Activated T-helper 1 cell treated with anti-CD3 and anti-CD28 coated beads, Interleukin-12 subunit alpha, Interleukin-12 subunit beta, Interleukin-2, Interleukin-4 antibody, amounts not matched to agents 30 ng/mL and 10 ng/mL and 1 ng/mL, durations not matched to agents 14 hours and 24 hours and 36 hours (primary cell): ENCODE measurements at regions of chr4 and their contacts with region 1.

Region 1: DNA sequence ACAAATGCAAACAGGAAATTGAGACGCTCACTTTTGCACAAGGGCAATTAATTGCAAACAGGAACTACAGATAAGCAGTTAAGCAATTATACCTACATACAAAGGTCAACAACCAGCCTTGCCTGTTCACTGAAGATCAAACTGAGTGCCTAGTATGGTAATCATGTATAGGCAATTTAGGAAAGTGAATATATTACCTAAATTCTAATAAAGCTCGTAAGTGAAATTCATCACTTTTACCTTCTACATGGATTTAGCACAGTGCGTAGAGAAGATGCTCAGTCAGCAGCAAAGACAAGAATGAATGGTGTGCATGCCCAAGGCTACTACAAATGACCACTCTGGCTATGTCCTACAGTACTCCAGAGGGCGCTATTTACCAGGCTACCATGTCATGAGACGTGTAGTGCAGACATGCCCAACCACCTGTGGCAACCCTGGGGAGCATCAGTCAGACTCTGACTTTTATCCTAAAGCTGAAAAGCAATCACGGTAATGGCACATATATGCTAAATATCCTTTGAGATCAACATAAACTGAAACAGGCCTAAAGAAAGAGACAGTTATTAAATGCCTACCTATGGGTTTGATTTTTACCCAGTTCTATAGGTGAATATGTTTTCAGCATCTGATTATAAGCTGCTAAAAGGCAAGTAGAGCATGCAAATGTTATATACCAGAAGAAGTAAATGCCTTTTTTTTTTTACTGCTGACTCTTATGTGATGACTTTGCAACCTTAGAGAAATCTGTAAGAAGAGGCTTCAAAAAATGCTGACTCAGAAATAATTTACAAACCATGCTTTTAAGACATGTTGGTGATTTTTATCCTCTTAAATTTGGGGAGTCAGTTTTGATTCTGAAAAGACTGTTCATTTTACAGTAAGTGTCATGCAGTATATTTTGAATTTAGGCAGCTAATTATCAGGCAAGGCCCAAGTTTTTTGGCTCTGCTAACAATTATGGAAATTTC is 178.0 kb downstream of the PPP3CA start:
- DNase-seq: peak; percentile 43
- H3K4me3 Mint-ChIP-seq: no peak overlapping the region
- H3K27ac Mint-ChIP-seq: no peak overlapping the region
- H3K4me1 Mint-ChIP-seq: no peaks in the 10 kb centered on the region
- H3K27me3 Mint-ChIP-seq: peaks cover 4% of the 10 kb centered on the region

Region 2: DNA sequence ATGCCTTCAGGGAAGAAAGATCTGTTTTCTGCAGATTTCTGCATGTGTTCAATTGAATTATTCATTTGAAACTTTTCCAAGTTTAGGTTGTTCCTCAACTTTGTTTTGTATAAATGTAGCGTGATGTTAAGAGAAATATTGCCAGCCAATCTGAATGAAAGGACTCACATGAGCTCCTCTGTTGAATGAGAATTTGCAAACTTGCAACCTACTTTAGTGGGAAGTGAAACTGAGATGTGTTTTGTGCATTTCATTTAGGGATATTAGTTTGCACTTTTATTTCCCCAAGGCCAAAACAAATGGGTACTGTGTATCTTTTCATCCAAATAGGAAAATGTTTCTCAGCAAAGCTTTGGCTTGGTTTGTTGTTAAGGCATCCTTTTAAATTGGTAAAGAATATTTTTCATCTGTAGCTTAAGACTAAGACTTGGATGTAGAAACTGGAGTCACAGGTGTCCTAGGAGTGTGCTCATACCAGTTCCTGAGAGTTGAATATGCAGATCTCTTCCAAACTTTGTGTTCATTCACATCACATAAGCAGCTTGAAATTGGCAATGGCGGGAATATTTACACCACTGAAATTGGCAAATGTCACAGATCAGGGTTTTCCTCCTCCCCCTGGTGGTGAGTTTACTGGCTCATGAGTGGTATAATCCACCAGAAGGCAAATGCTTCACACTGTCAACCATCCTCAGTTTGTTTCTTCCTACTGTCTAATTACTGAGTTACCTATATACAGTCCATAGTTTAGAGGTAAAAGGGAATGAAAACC is 427.6 kb after region 1 on chr4:
- intact Hi-C with region 1: loop called (anchors 1 kb)
- DNase-seq: no peak
- H3K4me3 Mint-ChIP-seq: no peak overlapping the region
- H3K27ac Mint-ChIP-seq: no peak overlapping the region
- H3K4me1 Mint-ChIP-seq: peaks cover 12% of the 10 kb centered on the region
- H3K27me3 Mint-ChIP-seq: no peaks in the 10 kb centered on the region

Region 3: GRCh38 chr4:102007959-102008425 is 838.7 kb after region 1 on chr4:
- intact Hi-C with region 1: loop called (anchors 10 kb)
- DNase-seq: no peak
- H3K4me3 Mint-ChIP-seq: no peak overlapping the region
- H3K27ac Mint-ChIP-seq: no peak overlapping the region
- H3K4me1 Mint-ChIP-seq: no peaks in the 10 kb centered on the region
- H3K27me3 Mint-ChIP-seq: peaks cover 7% of the 10 kb centered on the region